ENCODE measurements at regions of chr10 and their contacts with region 1.

Region 1: GRCh38 chr10:65710306-65710705 is 1215.5 kb upstream of the LRRTM3 start:
- DNase-seq: no peak
- H3K4me3 ChIP-seq: no peak overlapping the region
- H3K27ac ChIP-seq: no peak overlapping the region
- H3K27me3 ChIP-seq: no peaks in the 10 kb centered on the region
- CTCF ChIP-seq: no peak

Region 2: DNA sequence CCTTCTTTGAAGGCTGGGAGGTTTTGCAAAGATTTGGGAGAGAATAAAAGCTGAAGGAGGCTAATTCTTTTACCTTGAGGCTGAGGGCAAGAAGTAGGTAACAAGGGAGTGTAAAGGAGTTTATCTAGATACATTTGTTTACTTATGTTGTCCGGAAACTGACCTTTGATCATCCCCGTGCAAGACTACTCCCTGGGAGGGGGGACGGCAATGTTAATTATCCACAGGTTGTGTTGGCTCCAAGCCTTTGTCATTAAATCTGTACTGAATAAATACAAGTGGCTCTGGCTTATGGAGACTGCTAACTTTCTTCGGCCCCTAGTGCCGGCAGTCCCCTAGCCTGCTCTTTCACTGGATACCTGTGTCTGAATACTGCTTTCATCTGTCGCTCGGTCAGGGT is 35.1 kb before region 1 on chr10:
- intact Hi-C with region 1: loop called in 1 of 2 experiments (anchors 2 kb)
- DNase-seq: no peak
- H3K4me3 ChIP-seq: no peak overlapping the region
- H3K27ac ChIP-seq: no peak overlapping the region
- H3K27me3 ChIP-seq: no peaks in the 10 kb centered on the region
- CTCF ChIP-seq: no peak